Right ventricle myocardium inferior (tissue), 1 donor: ENCODE measurements at regions of chrX and their contacts with region 1.

Region 1: DNA sequence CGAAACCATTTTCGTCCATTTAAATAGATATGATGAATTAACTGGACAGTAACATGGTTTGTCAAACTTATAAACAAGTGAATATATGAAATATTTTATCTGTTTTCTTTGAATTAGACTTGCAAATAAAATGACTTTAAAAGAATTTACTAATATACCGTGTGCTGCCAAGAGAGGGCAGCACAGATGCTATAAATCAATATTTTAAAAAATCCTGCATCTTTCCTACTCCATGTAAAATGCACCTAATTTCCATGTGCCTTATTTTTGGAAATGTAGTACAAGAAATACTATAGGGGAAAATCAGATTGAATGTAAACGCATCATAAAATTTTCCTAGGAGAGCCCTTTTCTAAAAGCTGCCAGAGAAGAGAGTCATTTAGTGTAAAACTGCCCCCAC is 62.2 kb downstream of the PRKX start:
- DNase-seq: no peak
- ATAC-seq: no peak

Region 2: GRCh38 chrX:3713225-3713936 is 62.1 kb after region 1 on chrX and contains the start of gene PRKX:
- intact Hi-C with region 1: loop called (anchors 5 kb)
- DNase-seq: peak; percentile 77
- ATAC-seq: peak; percentile 88
- total RNA-seq, gene PRKX: 3.8 TPM

Region 3: GRCh38 chrX:3777416-3777815 is 126.1 kb after region 1 on chrX:
- intact Hi-C with region 1: no loop called
- DNase-seq: no peak
- ATAC-seq: no peak